Transverse colon (tissue), 4 donors: ENCODE measurements at regions of chr1 and their contacts with region 1.

Region 1: GRCh38 chr1:61049850-61050540 is 32.4 kb upstream of the NFIA start:
- DNase-seq: peak; percentile 96
- H3K4me3 ChIP-seq: peak overlapping the region; percentile 89 to 96 (median 94)
- H3K27ac ChIP-seq: peak overlapping the region; percentile 93 to 96 (median 96)
- H3K4me1 ChIP-seq: peaks cover 3 to 37% (median 15%) of the 10 kb centered on the region in 4 donors
- H3K27me3 ChIP-seq: peaks cover 2% of the 10 kb centered on the region
- CTCF ChIP-seq: peak; percentile 96 to 98 (median 97)
- EP300 ChIP-seq: no peak
- POLR2A ChIP-seq: peak; percentile 43

Region 2: DNA sequence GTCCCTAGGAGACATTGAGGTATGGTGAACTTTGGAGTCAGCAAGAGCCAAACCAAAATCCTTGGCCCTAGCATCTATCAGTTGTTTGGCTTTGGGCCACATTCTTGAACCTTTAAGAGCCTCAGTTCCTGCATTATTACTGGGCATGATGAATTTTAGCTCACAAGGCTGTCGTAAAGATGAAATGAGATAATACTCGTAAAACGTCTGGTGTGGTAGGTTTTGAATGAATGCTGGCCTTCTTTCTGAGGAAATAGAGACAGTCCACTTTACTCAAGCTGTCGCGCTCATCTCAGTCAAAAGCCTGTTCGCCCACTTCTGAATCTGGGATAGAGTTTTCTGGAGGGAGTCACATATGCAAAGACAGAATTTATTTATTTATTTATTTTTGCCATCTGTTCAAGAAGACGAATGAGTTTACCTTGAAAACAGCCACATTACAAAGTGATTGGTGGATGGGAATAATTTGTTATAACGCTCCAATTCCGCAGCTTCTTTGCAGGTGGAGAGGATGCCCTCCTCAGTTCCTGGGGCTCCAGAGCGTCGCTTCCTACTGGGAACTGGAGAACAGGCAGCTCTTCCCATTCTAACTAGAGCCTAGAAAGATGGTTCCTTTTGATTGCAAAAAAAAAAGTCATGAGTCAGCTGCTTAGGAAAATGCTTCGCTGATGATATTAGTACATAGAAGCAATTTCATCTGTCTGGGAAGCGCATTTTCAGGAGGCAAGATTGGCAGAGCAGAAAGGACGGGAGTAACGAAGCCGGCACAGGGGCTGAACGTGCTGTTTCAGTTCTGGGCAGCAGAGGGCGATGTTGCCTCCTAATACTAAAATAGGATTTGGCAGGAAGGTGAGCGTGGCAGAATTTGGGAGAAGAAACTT is 1073.6 kb before region 1 on chr1:
- in situ Hi-C with region 1: loop called in 3 of 4 experiments (anchors 25 kb)
- intact Hi-C with region 1: no loop called
- DNase-seq: peak; percentile 76
- H3K4me3 ChIP-seq: peak overlapping the region in 1 of 4 donors; percentile 17
- H3K27ac ChIP-seq: no peak overlapping the region
- H3K4me1 ChIP-seq: peaks cover 0 to 10% (median 1%) of the 10 kb centered on the region in 4 donors
- H3K27me3 ChIP-seq: no peaks in the 10 kb centered on the region
- CTCF ChIP-seq: peak; percentile 77 to 90 (median 82)
- EP300 ChIP-seq: no peak
- POLR2A ChIP-seq: no peak

Region 3: DNA sequence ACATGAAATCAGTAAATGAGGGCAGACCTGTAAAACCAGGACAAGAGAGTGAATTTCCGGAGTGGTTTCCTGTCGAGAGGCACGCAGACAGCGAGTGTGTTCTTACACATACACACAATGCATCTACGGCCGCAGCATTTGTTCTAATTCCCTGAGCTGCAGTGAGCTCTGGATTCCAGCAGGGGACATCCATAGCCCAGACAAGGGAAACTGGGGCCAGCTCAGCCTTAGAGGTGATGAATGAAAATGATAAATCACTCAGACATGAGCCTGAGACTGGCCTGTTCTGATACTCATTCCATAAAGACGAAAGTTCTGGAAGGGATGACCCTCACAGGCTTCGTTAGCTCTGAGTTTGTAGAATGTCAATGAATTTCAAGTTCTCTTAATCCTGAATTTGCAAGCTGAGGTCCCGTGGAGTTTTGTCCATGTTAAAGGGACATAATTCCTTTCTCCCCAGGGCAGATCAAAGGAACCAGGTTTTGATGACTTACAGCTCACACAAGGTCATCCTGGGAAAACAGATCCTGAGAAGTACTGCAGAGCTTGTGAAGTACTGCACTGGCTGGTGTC is 768.5 kb before region 1 on chr1:
- in situ Hi-C with region 1: loop called in 1 of 4 experiments (anchors 25 kb)
- intact Hi-C with region 1: no loop called
- DNase-seq: peak; percentile 55
- H3K4me3 ChIP-seq: no peak overlapping the region
- H3K27ac ChIP-seq: no peak overlapping the region
- H3K4me1 ChIP-seq: peaks cover 0 to 10% (median 0%) of the 10 kb centered on the region in 4 donors
- H3K27me3 ChIP-seq: no peaks in the 10 kb centered on the region
- CTCF ChIP-seq: peak; percentile 71 to 85 (median 81)
- EP300 ChIP-seq: no peak
- POLR2A ChIP-seq: no peak

Region 4: GRCh38 chr1:60978421-60979357 is 71.3 kb before region 1 on chr1:
- in situ Hi-C with region 1: no loop called
- intact Hi-C with region 1: loop called (anchors 10 kb)
- DNase-seq: peak; percentile 21
- H3K4me3 ChIP-seq: no peak overlapping the region
- H3K27ac ChIP-seq: no peak overlapping the region
- H3K4me1 ChIP-seq: peaks cover 0 to 11% (median 0%) of the 10 kb centered on the region in 4 donors
- H3K27me3 ChIP-seq: no peaks in the 10 kb centered on the region
- CTCF ChIP-seq: peak; percentile 17 to 47 (median 38)
- EP300 ChIP-seq: no peak
- POLR2A ChIP-seq: no peak

Region 5: GRCh38 chr1:61337981-61338848 is 288.2 kb after region 1 on chr1:
- in situ Hi-C with region 1: loop called in 3 of 4 experiments (anchors 10 to 25 kb)
- intact Hi-C with region 1: no loop called
- DNase-seq: peak; percentile 60
- H3K4me3 ChIP-seq: peak overlapping the region in 1 of 4 donors; percentile 1
- H3K27ac ChIP-seq: peak overlapping the region; percentile 69 to 78 (median 74)
- H3K4me1 ChIP-seq: peaks cover 7 to 26% (median 17%) of the 10 kb centered on the region in 4 donors
- H3K27me3 ChIP-seq: no peaks in the 10 kb centered on the region
- CTCF ChIP-seq: peak; percentile 62 to 79 (median 70)
- EP300 ChIP-seq: no peak
- POLR2A ChIP-seq: no peak

Region 6: GRCh38 chr1:61641578-61642336 is 591.8 kb after region 1 on chr1:
- in situ Hi-C with region 1: loop called in 1 of 4 experiments (anchors 25 kb)
- intact Hi-C with region 1: no loop called
- DNase-seq: peak; percentile 69
- H3K4me3 ChIP-seq: peak overlapping the region in 1 of 4 donors; percentile 29
- H3K27ac ChIP-seq: peak overlapping the region; percentile 57 to 75 (median 62)
- H3K4me1 ChIP-seq: peaks cover 3 to 9% (median 7%) of the 10 kb centered on the region in 4 donors
- H3K27me3 ChIP-seq: no peaks in the 10 kb centered on the region
- CTCF ChIP-seq: peak; percentile 47 to 69 (median 61)
- EP300 ChIP-seq: no peak
- POLR2A ChIP-seq: no peak

Region 7: DNA sequence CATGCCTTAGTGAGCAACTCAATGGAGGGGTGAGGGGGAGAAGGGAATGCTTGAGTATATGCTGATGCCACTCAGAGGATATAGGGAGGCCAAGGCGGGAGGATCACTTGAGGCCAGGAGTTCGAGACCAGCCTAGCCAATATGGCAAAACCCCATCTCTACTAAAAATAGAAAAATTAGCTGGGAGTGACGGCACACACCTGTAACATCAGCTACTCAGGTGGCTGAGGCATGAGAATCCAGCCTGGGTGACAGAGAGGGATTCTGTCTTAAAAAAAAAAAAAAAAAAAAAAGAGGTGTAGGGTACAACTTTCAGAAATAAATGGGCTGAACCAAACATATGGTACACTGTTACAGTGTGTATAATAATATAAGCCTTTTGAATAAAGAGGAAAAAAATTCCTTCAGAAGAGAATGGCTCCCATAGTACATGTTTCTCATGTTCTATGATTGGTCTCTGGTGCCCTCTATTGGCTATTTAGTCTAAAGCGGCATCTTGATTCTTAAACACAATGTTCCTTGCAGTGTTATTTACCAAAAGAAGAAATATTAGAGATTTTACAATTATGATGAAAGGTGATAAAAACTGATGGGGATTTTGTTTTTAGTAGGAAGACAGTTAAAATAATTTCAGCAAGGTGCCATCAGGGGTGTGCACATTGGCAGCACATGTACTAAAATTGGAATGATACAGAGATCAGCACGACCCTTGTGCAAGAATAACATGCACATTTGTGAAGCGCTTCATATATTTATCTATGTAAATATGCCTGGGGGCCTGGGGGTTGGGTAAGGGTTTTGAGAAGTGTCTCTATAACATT is 802.1 kb after region 1 on chr1:
- in situ Hi-C with region 1: loop called in 3 of 4 experiments (anchors 25 kb)
- intact Hi-C with region 1: no loop called
- DNase-seq: no peak
- H3K4me3 ChIP-seq: no peak overlapping the region
- H3K27ac ChIP-seq: no peak overlapping the region
- H3K4me1 ChIP-seq: no peaks in the 10 kb centered on the region
- H3K27me3 ChIP-seq: no peaks in the 10 kb centered on the region
- CTCF ChIP-seq: peak; percentile 53 to 68 (median 64)
- EP300 ChIP-seq: no peak
- POLR2A ChIP-seq: no peak